HAP-1 (cell line): ENCODE measurements at regions of chr1 and their contacts with region 1.

Region 1: GRCh38 chr1:226332947-226333346 is 24.0 kb upstream of the LIN9 start:
- DNase-seq: no peak
- H3K4me3 ChIP-seq: no peak overlapping the region
- H3K4me1 ChIP-seq: peaks cover 5% of the 10 kb centered on the region; the same call in 1 of the 2 replicates
- H3K27me3 ChIP-seq: no peaks in the 10 kb centered on the region

Region 2: DNA sequence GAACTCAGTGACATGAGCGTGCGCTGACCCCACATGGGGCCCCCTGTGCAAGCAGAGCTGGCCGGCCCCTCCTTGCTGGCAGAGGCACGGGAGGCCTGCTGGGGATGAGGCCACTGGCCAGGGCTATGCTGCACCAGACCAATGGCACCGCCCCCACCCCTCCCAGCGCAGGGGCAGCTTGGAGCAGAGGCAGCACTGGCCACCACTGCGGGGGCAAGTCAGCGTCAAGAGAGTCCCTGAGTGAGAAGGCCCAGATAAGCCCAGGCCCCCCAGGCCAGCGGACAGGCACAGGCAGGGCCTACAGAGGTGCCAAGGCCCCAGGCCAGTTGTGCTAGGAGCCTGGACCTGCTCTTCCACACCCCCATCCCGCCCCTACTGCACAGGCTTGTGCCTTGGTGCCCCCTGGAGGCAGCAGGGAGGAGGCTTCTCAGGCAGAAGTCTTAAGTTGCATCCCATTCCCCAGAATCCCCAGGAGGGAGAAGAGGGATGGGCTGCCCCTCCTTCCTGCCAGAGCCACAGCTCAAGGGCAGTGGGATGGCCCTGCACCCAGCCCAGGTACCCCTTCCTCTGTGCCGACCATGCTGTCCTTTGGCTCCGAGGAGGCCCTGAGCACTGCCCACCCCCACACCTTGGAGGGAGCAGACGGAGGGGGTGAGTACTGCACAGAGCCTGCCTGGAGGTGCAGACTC is 487.2 kb before region 1 on chr1:
- in situ Hi-C with region 1: no loop called
- DNase-seq: peak; percentile 63 to 85
- H3K4me3 ChIP-seq: no peak overlapping the region
- H3K4me1 ChIP-seq: no peaks in the 10 kb centered on the region
- H3K27me3 ChIP-seq: no peaks in the 10 kb centered on the region

Region 3: DNA sequence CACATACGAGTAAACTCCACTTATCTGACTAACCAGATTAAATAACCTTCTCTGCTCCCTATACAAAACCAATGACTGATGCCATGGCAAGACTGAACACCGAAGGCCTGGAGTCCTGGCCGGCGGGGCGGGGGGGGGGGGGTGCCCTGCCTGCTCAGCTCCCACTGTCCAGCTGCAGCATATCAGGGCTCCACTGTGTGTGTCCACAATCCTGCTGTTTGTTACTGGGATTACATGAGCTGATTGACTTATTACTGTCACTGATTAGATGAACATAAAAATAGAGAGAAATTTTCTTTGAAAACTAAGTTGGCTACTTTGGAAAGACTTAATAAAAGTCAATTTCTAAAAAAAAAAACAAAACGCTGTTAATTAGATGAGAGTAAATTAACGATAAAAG is 475.7 kb before region 1 on chr1:
- in situ Hi-C with region 1: no loop called
- DNase-seq: no peak
- H3K4me3 ChIP-seq: no peak overlapping the region
- H3K4me1 ChIP-seq: peaks cover 7% of the 10 kb centered on the region
- H3K27me3 ChIP-seq: no peaks in the 10 kb centered on the region

Region 4: GRCh38 chr1:226135059-226135651 is 197.8 kb before region 1 on chr1:
- in situ Hi-C with region 1: loop called (anchors 10 kb)
- DNase-seq: peak in 1 of 2 experiments; percentile 5
- H3K4me3 ChIP-seq: no peak overlapping the region
- H3K4me1 ChIP-seq: no peaks in the 10 kb centered on the region
- H3K27me3 ChIP-seq: no peaks in the 10 kb centered on the region

Region 5: GRCh38 chr1:226268421-226269116 is 64.4 kb before region 1 on chr1:
- in situ Hi-C with region 1: no loop called
- DNase-seq: no peak
- H3K4me3 ChIP-seq: no peak overlapping the region
- H3K4me1 ChIP-seq: no peaks in the 10 kb centered on the region
- H3K27me3 ChIP-seq: no peaks in the 10 kb centered on the region